ENCODE measurements at regions of chr18 and their contacts with region 1.

Region 1: DNA sequence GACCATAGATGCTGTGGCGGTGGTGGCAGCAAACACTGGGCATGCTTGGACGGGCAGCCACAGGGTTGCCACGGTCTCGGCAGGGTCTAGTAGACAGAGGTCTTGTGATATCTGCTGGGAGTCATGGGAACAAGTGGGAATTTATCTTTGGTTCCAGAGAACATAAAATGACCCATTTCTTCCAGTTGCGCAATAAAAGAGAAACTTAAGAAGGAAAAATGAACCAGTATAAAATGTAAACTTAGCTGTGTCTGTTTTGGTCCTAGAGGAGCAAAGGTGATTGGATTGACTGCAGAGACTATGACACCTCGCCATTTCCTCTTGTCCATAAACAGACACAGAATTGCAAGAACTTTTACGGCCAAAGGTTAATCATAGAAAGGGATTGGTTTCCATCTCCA is 132.6 kb upstream of the RBBP8 start:
- DNase-seq: no peak
- ATAC-seq: no peak
- H3K4me3 ChIP-seq: no peak overlapping the region
- H3K27ac ChIP-seq: no peak overlapping the region
- H3K4me1 ChIP-seq: no peaks in the 10 kb centered on the region; the same call in 1 of the 2 replicates
- H3K27me3 ChIP-seq: no peaks in the 10 kb centered on the region
- CTCF ChIP-seq: no peak
- EP300 ChIP-seq: no peak
- POLR2A ChIP-seq: no peak
- RAD21 ChIP-seq: no peak

Region 2: DNA sequence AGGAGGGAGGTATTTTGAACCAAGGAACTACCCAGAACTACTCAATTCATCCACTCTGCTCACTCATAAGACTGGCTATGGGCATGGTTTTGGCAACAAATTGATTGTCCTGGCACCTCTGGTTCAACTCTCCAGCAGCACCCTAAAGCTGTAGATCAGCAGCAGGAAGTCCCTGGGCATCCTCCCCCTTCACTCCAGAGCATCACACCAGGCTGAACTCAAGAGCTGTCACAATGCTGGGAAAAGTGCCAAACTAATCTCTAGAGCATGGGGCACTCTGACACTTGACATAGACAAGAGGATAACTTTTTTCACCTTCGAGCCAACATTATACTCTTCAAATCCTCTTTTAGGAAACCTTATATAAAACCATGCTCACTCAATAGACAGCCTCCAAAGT is 21.6 kb before region 1 on chr18:
- CTCF ChIA-PET with region 1: interaction called, 58 read pairs
- POLR2A ChIA-PET with region 1: no interaction called
- RAD21 ChIA-PET with region 1: interaction called, 7 read pairs
- SMC1A ChIA-PET with region 1: interaction called, 13 read pairs
- in situ Hi-C with region 1: no loop called
- intact Hi-C with region 1: no loop called
- DNase-seq: no peak
- ATAC-seq: no peak
- H3K4me3 ChIP-seq: no peak overlapping the region
- H3K27ac ChIP-seq: no peak overlapping the region
- H3K4me1 ChIP-seq: no peaks in the 10 kb centered on the region
- H3K27me3 ChIP-seq: no peaks in the 10 kb centered on the region; a peak in 1 of 4 replicates
- CTCF ChIP-seq: no peak
- EP300 ChIP-seq: no peak
- POLR2A ChIP-seq: no peak
- RAD21 ChIP-seq: no peak

Region 3: DNA sequence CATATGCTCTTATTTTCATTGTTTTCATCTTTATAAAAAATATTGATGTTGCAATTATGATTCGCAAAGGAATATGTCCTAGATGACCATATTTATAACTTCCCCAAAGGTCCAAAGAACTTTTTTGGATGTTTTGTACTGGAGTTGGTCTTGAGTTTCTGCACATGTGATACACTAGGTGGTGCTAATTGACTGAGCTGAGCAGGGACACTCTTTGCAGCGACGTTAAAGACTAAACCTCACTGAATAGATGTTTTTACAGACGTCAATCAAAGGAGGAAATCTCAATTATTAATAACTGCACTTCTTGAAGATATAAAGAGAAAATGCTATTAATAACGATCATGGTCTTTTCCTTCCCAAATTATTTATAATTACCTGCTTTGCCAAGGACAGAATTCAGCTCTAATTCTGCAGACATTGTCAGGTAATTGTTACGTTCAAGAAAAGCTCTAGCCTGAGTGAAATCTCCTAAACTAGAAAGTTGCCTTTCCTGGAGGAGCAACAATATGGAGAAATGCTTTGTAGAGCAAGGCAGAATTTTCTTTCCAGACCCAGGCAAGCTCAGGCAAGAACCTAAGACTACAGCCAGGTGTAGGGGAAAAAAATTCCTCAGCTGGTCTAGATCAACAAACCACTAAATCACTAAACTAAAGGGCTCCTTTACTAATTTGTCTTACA is 13.2 kb after region 1 on chr18:
- CTCF ChIA-PET with region 1: interaction called, 19 read pairs
- POLR2A ChIA-PET with region 1: interaction called, 4 read pairs
- RAD21 ChIA-PET with region 1: interaction called, 9 read pairs
- SMC1A ChIA-PET with region 1: interaction called, 24 read pairs
- in situ Hi-C with region 1: no loop called
- intact Hi-C with region 1: no loop called
- DNase-seq: no peak
- ATAC-seq: peak; percentile 78
- H3K4me3 ChIP-seq: no peak overlapping the region
- H3K27ac ChIP-seq: no peak overlapping the region
- H3K4me1 ChIP-seq: no peaks in the 10 kb centered on the region
- H3K27me3 ChIP-seq: no peaks in the 10 kb centered on the region
- CTCF ChIP-seq: peak; percentile 48 to 79 (median 65); a peak in 5 of 6 replicates
- EP300 ChIP-seq: no peak
- POLR2A ChIP-seq: no peak
- RAD21 ChIP-seq: peak; percentile 98

Region 4: DNA sequence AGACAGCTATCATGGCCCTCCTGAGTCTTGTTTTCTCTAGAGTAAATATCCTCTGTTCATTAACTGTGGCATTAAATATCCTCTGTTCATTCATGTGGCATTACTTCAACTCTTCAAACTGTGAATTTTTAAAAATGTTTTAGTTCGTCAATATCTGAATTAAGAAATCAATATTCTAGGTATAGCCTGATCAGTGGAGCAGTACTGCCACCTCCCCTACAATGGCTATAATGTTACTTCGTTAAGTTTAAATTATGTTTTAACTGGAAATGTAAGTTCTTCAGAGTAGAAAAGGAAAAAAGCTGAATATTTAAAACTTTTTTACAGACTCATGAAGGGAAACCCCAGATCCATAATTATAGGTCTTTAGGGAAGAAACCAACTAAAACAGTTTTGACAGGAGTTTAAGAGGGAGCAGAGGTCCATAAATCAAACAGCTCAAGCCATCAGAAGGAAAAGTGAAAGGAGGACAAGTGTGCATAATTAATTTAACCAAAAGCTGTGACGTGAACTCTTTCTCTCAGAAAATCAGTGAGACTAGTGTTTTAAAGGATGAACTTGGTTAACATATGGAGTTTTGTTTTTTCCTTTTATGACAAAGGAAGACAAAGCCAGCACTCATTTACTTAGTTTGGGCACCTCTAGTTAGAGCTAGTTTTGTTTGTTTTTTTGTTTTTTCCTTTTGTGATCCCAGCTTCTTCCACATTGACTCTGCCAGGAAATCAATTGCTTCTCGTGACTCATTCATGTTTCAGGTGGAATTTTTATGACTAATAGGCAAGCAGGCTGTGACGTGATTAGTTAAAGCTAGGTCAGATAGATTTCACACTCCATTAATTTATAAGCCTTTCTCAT is 177.5 kb after region 1 on chr18:
- CTCF ChIA-PET with region 1: interaction called, 63 read pairs
- POLR2A ChIA-PET with region 1: interaction called, 3 read pairs
- RAD21 ChIA-PET with region 1: interaction called, 39 read pairs
- SMC1A ChIA-PET with region 1: interaction called, 49 read pairs
- in situ Hi-C with region 1: loop called (anchors 5 kb)
- intact Hi-C with region 1: loop called (anchors 1 kb)
- DNase-seq: no peak
- ATAC-seq: peak; percentile 82
- H3K4me3 ChIP-seq: no peak overlapping the region
- H3K27ac ChIP-seq: peak overlapping the region; percentile 37; the same call in 1 of the 2 replicates
- H3K4me1 ChIP-seq: no peaks in the 10 kb centered on the region
- H3K27me3 ChIP-seq: no peaks in the 10 kb centered on the region
- CTCF ChIP-seq: no peak; a peak in 1 of 6 replicates
- EP300 ChIP-seq: no peak
- POLR2A ChIP-seq: no peak
- RAD21 ChIP-seq: peak; percentile 5; the same call in 1 of the 2 replicates

Region 5: GRCh38 chr18:23377669-23378301 is 577.2 kb after region 1 on chr18:
- CTCF ChIA-PET with region 1: interaction called, 10 read pairs
- POLR2A ChIA-PET with region 1: interaction called, 3 read pairs
- RAD21 ChIA-PET with region 1: no interaction called
- SMC1A ChIA-PET with region 1: no interaction called
- in situ Hi-C with region 1: no loop called
- intact Hi-C with region 1: no loop called
- DNase-seq: peak; percentile 39
- ATAC-seq: peak; percentile 88
- H3K4me3 ChIP-seq: no peak overlapping the region
- H3K27ac ChIP-seq: no peak overlapping the region
- H3K4me1 ChIP-seq: peaks cover 2% of the 10 kb centered on the region; the same call in 1 of the 2 replicates
- H3K27me3 ChIP-seq: no peaks in the 10 kb centered on the region
- CTCF ChIP-seq: no peak
- EP300 ChIP-seq: 0 out of 4 replicates have a peak, but pooled peaks of 1 of the 2 experiments have one; percentile 31
- POLR2A ChIP-seq: no peak
- RAD21 ChIP-seq: no peak

Measured in GM12878 (cell line).